ENCODE measurements at regions of chr4 and their contacts with region 1.

Region 1: GRCh38 chr4:56112377-56112776 is 163.6 kb downstream of the CEP135 start:
- DNase-seq: no peak
- H3K4me3 ChIP-seq: no peak overlapping the region
- H3K27ac ChIP-seq: no peak overlapping the region
- H3K4me1 ChIP-seq: no peaks in the 10 kb centered on the region
- H3K27me3 ChIP-seq: no peaks in the 10 kb centered on the region
- CTCF ChIP-seq: no peak
- POLR2A ChIP-seq: no peak

Region 2: DNA sequence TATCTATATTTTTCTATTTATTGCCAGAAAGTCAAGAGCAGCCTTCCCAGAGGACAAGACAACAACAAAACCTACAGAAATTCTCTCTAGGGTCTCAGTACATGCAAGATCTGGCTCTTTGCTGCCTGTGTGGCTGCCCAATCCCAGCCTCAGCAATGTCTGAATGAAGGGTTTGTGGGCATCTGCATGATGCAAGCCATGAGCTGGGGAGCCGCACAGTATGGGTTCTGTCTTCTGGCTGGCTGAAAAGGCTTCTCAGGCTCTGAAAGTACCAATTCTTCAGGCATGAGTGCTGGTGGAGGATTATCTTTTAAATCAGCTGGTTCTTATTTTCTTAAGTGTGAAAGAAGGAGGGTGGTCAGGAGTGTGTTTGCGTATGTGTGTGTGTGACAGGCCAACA is 1778.7 kb before region 1 on chr4:
- intact Hi-C with region 1: loop called (anchors 5 kb)
- DNase-seq: no peak
- H3K4me3 ChIP-seq: no peak overlapping the region
- H3K27ac ChIP-seq: no peak overlapping the region
- H3K4me1 ChIP-seq: no peaks in the 10 kb centered on the region
- H3K27me3 ChIP-seq: no peaks in the 10 kb centered on the region
- CTCF ChIP-seq: no peak
- POLR2A ChIP-seq: no peak

Region 3: GRCh38 chr4:55543858-55544257 is 568.5 kb before region 1 on chr4:
- intact Hi-C with region 1: no loop called
- DNase-seq: no peak
- H3K4me3 ChIP-seq: no peak overlapping the region
- H3K27ac ChIP-seq: no peak overlapping the region
- H3K4me1 ChIP-seq: peaks cover 22% of the 10 kb centered on the region
- H3K27me3 ChIP-seq: no peaks in the 10 kb centered on the region
- CTCF ChIP-seq: no peak
- POLR2A ChIP-seq: no peak

Measured in vagina (tissue), 2 donors.